ENCODE measurements at regions of chr9 and their contacts with region 1.

Region 1: GRCh38 chr9:74958587-74958986 is 5.9 kb upstream of the C9orf40 start:
- DNase-seq: no peak
- ATAC-seq: no peak
- H3K4me3 ChIP-seq: no peak overlapping the region
- H3K27ac ChIP-seq: no peak overlapping the region
- H3K4me1 ChIP-seq: peaks cover 0 to 4% (median 0%) of the 10 kb centered on the region in 12 donors
- H3K27me3 ChIP-seq: no peaks in the 10 kb centered on the region
- CTCF ChIP-seq: no peak
- POLR2A ChIP-seq: no peak

Region 2: GRCh38 chr9:74570879-74571512 is 387.6 kb before region 1 on chr9:
- intact Hi-C with region 1: no loop called
- DNase-seq: no peak
- ATAC-seq: no peak
- H3K4me3 ChIP-seq: no peak overlapping the region
- H3K27ac ChIP-seq: no peak overlapping the region
- H3K4me1 ChIP-seq: no peaks in the 10 kb centered on the region
- H3K27me3 ChIP-seq: peaks cover 0 to 6% (median 0%) of the 10 kb centered on the region in 9 donors
- CTCF ChIP-seq: peak; percentile 40 to 74 (median 62)
- POLR2A ChIP-seq: no peak

Region 3: GRCh38 chr9:74985041-74985440 is 26.5 kb after region 1 on chr9:
- intact Hi-C with region 1: loop called in 1 of 10 experiments (anchors 5 kb)
- DNase-seq: no peak
- ATAC-seq: no peak
- H3K4me3 ChIP-seq: no peak overlapping the region
- H3K27ac ChIP-seq: no peak overlapping the region
- H3K4me1 ChIP-seq: no peaks in the 10 kb centered on the region
- H3K27me3 ChIP-seq: no peaks in the 10 kb centered on the region
- CTCF ChIP-seq: no peak
- POLR2A ChIP-seq: no peak

Measured in heart left ventricle (tissue), 16 donors.